Endothelial cell of umbilical vein (primary cell): ENCODE measurements at regions of chr1 and their contacts with region 1.

Region 1: DNA sequence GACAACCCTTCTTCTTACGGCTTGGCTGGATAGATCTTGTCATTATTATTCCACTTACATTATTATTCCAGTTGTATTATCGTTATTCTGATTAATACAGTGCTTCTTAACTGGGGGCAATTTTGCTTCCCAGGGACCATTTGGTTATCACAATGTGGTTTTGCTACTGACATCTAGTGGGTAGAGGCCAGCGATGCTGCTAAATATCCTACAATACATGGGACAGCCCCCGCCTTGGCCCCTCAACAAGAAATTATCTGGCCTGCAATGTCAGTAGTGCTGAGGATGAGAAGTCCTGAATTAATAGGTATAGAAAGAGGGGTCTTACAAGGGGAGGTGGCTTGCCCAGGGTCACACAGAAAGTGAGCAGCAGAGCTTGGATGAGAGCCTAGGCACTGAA is 105.6 kb downstream of the PTPRU start:
- DNase-seq: no peak
- H3K4me3 ChIP-seq: no peak overlapping the region
- H3K27ac ChIP-seq: no peak overlapping the region
- H3K4me1 ChIP-seq: no peaks in the 10 kb centered on the region
- H3K27me3 ChIP-seq: peaks cover 0 to 2% of the 10 kb centered on the region in 2 experiments
- CTCF ChIP-seq: no peak
- POLR2A ChIP-seq: no peak

Region 2: DNA sequence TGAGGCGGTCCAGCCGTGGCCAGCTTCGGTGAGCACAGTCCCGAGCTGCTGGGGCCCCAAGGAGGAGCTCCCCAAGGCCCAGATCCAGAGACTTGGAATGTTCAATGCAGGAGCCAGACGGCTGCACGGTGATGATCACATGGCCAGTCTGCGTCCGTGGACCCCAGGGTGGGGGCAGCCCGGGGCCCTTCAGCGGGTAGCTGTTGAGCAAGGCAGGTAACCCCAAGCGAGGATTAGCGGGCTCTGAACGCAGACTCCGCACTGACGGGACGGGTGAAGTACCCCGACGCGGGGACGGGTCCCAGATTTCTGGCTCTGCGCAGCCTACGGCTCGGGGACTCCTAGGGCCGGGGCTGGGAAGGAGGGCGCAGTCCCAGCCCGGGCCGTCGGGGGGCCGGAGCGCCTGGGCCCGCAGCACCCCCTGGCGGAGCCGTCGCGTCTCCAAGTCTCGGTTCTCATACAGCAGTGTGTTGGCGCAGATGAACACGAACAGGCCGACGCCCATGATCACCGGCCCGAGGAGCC is 220.9 kb before region 1 on chr1:
- CTCF ChIA-PET with region 1: no interaction called
- POLR2A ChIA-PET with region 1: no interaction called
- dilution Hi-C with region 1: no loop called
- intact Hi-C with region 1: no loop called
- DNase-seq: peak; percentile 42
- H3K4me3 ChIP-seq: no peak overlapping the region
- H3K27ac ChIP-seq: no peak overlapping the region
- H3K4me1 ChIP-seq: peaks cover 23% of the 10 kb centered on the region
- H3K27me3 ChIP-seq: peaks cover 0 to 14% of the 10 kb centered on the region in 2 experiments
- CTCF ChIP-seq: peak; percentile 74
- POLR2A ChIP-seq: no peak

Region 3: DNA sequence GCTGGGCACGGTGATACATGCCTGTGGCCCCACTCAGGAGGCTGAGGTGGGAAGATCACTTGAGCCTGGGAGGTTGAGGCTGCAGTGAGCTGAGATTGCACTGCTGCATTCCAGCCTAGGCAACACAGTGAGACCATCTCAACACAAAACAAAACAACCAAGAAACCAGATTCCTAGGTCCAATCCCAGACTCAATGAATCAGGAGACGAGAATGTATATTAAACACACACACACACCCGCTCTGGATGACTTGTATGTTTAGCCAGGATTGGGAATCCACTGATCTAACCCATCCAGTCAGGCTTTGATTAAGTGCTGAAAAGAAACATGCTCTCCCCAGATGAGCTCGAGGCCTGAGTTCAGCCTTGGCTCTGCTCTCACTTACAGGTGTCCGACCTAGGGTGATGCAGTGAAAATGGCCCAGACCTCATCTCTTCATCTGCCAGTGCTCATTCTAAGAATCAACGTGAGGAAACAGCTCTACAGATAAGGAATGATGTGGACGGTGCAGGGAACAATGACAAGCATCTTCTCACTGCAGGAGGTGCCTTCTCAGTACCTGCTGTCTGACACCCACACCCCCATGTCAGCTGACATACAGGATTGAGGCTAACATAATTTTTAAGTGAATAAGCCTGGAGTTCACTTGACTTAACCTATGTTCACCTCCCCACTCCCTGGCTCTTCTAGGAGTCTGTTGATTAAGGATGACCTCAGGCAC is 144.9 kb before region 1 on chr1:
- CTCF ChIA-PET with region 1: no interaction called
- POLR2A ChIA-PET with region 1: no interaction called
- dilution Hi-C with region 1: no loop called
- intact Hi-C with region 1: no loop called
- DNase-seq: no peak
- H3K4me3 ChIP-seq: no peak overlapping the region
- H3K27ac ChIP-seq: no peak overlapping the region
- H3K4me1 ChIP-seq: peaks cover 3% of the 10 kb centered on the region
- H3K27me3 ChIP-seq: no peaks in the 10 kb centered on the region
- CTCF ChIP-seq: no peak
- POLR2A ChIP-seq: no peak

Region 4: GRCh38 chr1:29292344-29292743 is 49.6 kb before region 1 on chr1:
- CTCF ChIA-PET with region 1: no interaction called
- POLR2A ChIA-PET with region 1: no interaction called
- dilution Hi-C with region 1: no loop called
- intact Hi-C with region 1: no loop called
- DNase-seq: no peak
- H3K4me3 ChIP-seq: no peak overlapping the region
- H3K27ac ChIP-seq: no peak overlapping the region
- H3K4me1 ChIP-seq: no peaks in the 10 kb centered on the region
- H3K27me3 ChIP-seq: no peaks in the 10 kb centered on the region
- CTCF ChIP-seq: no peak
- POLR2A ChIP-seq: no peak

Region 5: DNA sequence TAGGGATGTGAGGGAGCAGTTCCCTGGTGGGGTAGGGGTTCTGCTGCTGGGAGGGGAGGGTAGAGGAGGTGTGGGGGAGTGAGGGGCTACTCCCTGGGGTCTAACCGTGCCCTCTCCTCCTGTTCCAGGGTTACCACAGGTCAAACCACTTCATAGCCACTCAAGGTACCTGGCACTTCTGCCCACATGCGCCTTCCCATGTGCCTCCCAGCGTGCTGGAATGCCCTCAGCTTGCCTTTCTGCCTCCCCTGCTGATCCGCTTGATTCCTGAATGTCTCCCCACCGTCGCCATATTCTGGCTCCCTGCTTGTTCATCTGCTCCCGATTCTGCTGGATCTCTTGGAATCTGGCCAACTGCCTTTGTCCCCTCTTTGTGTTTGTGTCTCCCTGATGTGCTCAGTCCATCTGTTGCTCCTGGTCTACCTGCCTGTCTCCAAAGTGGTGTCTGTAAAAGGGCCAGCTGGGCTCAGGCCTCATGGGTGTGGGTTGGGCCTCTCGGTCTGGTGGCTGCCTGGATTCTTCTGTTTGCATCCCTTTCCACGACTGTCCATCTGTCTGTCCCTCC is 31.2 kb before region 1 on chr1:
- CTCF ChIA-PET with region 1: no interaction called
- POLR2A ChIA-PET with region 1: no interaction called
- dilution Hi-C with region 1: no loop called
- intact Hi-C with region 1: no loop called
- DNase-seq: no peak
- H3K4me3 ChIP-seq: no peak overlapping the region
- H3K27ac ChIP-seq: no peak overlapping the region
- H3K4me1 ChIP-seq: no peaks in the 10 kb centered on the region
- H3K27me3 ChIP-seq: no peaks in the 10 kb centered on the region
- CTCF ChIP-seq: no peak
- POLR2A ChIP-seq: no peak

Region 6: GRCh38 chr1:29396438-29397255 is 54.7 kb after region 1 on chr1:
- CTCF ChIA-PET with region 1: interaction called, 34 read pairs
- POLR2A ChIA-PET with region 1: interaction called, 5 read pairs
- dilution Hi-C with region 1: no loop called
- intact Hi-C with region 1: no loop called
- DNase-seq: no peak
- H3K4me3 ChIP-seq: no peak overlapping the region
- H3K27ac ChIP-seq: no peak overlapping the region
- H3K4me1 ChIP-seq: no peaks in the 10 kb centered on the region
- H3K27me3 ChIP-seq: no peaks in the 10 kb centered on the region
- CTCF ChIP-seq: peak in 1 of 2 donors; percentile 16
- POLR2A ChIP-seq: no peak

Region 7: DNA sequence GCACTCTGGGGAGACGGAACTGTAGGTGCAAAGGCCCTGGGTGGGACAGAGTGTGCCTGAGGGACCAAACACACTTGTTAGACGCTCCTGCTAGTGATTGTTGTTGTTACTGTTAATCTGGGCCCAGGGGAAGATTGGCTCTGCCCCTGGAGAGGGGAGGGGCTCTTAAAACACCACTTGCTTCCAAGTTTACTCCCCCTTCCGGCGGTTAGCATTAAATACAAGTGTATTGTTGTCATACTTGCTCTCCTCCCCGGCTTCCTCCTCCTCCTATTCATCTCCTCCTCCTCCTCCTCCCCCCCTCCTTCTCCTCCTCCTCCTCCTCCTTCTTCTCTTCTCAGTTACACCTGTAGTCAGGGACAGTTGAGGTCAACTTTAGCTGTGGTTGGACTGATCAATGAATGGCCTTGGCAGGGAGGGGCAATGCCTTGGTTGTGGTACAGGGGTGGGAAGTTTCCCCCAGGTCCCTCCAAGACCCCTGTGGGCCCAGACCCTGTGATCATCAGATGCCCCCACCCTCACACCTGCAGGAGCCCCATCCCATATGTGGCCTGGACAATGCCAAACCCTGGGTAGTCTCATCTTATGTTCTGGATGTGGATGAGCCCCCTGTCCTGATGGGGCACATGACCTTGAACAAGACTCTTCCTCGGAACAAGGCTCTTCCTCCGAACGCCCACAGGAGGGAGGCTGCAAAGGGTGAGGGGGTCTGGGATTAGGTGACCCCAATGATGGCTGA is 111.7 kb after region 1 on chr1:
- CTCF ChIA-PET with region 1: no interaction called
- POLR2A ChIA-PET with region 1: no interaction called
- dilution Hi-C with region 1: no loop called
- intact Hi-C with region 1: loop called (anchors 1 kb)
- DNase-seq: peak; percentile 26
- H3K4me3 ChIP-seq: no peak overlapping the region
- H3K27ac ChIP-seq: no peak overlapping the region
- H3K4me1 ChIP-seq: no peaks in the 10 kb centered on the region
- H3K27me3 ChIP-seq: no peaks in the 10 kb centered on the region
- CTCF ChIP-seq: peak; percentile 6 to 18
- POLR2A ChIP-seq: no peak

Region 8: GRCh38 chr1:29703596-29704370 is 361.8 kb after region 1 on chr1:
- CTCF ChIA-PET with region 1: interaction called, 15 read pairs
- POLR2A ChIA-PET with region 1: no interaction called
- dilution Hi-C with region 1: no loop called
- intact Hi-C with region 1: no loop called
- DNase-seq: peak; percentile 39
- H3K4me3 ChIP-seq: no peak overlapping the region
- H3K27ac ChIP-seq: no peak overlapping the region
- H3K4me1 ChIP-seq: peaks cover 11% of the 10 kb centered on the region
- H3K27me3 ChIP-seq: peaks cover 10 to 16% of the 10 kb centered on the region in 2 experiments
- CTCF ChIP-seq: peak; percentile 68 to 75
- POLR2A ChIP-seq: no peak

Region 9: DNA sequence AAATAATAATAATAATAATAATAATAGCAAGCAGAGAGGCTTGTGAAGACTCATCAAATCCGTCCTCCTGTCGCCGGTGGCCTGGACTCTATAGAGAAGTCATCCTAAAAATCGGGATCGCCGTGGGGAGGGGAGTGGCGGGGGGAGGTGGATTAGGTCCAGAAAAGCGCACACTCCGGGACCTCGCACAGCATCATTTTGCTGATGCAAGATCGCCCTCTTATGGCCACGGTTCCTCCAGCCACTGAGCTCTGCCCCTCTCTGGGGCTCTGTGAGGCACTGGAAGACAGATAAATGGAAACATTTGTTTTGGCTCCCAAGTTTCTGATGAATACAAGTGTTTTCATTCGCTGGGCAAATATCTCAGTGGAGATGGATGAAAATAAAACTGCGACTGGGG is 769.5 kb after region 1 on chr1:
- CTCF ChIA-PET with region 1: interaction called, 6 read pairs
- POLR2A ChIA-PET with region 1: no interaction called
- dilution Hi-C with region 1: no loop called
- intact Hi-C with region 1: loop called (anchors 5 kb)
- DNase-seq: peak; percentile 18
- H3K4me3 ChIP-seq: no peak overlapping the region
- H3K27ac ChIP-seq: no peak overlapping the region
- H3K4me1 ChIP-seq: no peaks in the 10 kb centered on the region
- H3K27me3 ChIP-seq: peaks cover 0 to 1% of the 10 kb centered on the region in 2 experiments
- CTCF ChIP-seq: peak; percentile 53 to 56
- POLR2A ChIP-seq: no peak